IMR-90 (cell line): ENCODE measurements at regions of chr21 and their contacts with region 1.

Region 1: DNA sequence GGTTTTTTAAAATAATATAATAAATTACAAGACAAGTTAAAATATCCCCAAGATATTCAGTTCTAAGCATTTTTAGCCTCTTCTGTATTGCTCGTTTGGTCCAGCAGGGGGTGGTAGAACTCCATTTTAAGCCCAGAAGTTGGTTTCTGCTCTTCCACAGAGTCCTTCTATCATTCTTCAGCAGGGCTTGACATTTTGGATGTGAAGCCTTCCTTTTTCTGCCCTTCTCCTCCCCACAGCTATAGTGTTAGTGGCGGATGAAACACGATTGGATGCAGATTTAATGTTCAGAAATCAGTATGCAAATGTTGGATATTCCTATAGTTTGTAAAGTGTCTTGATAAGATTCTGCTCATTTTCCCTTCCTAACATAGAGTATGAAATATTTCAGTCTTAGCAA is 1.4 kb downstream of the NCAM2 start:
- DNase-seq: peak; percentile 49
- ATAC-seq: peak; percentile 55
- H3K4me3 ChIP-seq: no peak overlapping the region
- H3K27ac ChIP-seq: no peak overlapping the region
- H3K4me1 ChIP-seq: no peaks in the 10 kb centered on the region
- H3K27me3 ChIP-seq: peaks cover 6% of the 10 kb centered on the region; the same call in 1 of the 2 replicates
- CTCF ChIP-seq: peak; percentile 89
- POLR2A ChIP-seq: no peak
- RAD21 ChIP-seq: peak; percentile 89

Region 2: GRCh38 chr21:21101911-21102310 is 102.3 kb after region 1 on chr21:
- CTCF ChIA-PET with region 1: interaction called, 14 read pairs
- POLR2A ChIA-PET with region 1: no interaction called
- dilution Hi-C with region 1: no loop called
- in situ Hi-C with region 1: no loop called
- intact Hi-C with region 1: loop called (anchors 1 kb)
- DNase-seq: peak; percentile 85
- ATAC-seq: peak; percentile 69
- H3K4me3 ChIP-seq: no peak overlapping the region
- H3K27ac ChIP-seq: no peak overlapping the region
- H3K4me1 ChIP-seq: 0 out of 2 replicates have a peak, but pooled peaks cover 1% of the 10 kb centered on the region
- H3K27me3 ChIP-seq: no peaks in the 10 kb centered on the region
- CTCF ChIP-seq: 0 out of 2 replicates have a peak, but pooled peaks have one; percentile 31
- POLR2A ChIP-seq: no peak
- RAD21 ChIP-seq: peak; percentile 30; the same call in 1 of the 2 replicates

Region 3: DNA sequence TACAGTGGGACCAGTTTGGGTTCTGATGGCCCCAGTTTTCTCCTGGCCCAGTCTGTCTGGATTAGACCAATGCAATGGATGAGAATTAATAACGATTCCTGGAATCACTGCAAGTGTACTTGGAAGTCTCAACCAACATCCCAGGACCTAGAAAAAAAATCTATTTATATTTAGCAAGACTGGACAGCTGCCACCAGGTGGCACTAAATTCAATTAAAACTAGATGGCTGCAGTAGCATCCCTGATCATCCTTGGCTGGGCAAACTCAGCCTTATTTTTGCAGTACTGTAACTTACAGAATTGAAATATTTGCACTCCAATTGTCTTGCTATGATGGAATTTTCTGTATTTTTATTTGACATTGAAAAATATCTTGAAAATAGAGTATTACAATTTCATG is 164.2 kb after region 1 on chr21:
- CTCF ChIA-PET with region 1: no interaction called
- POLR2A ChIA-PET with region 1: no interaction called
- dilution Hi-C with region 1: no loop called
- in situ Hi-C with region 1: no loop called
- intact Hi-C with region 1: loop called (anchors 1 kb)
- DNase-seq: peak; percentile 82
- ATAC-seq: peak; percentile 54
- H3K4me3 ChIP-seq: no peak overlapping the region
- H3K27ac ChIP-seq: peak overlapping the region; percentile 40; the same call in 1 of the 2 replicates
- H3K4me1 ChIP-seq: peaks cover 4% of the 10 kb centered on the region
- H3K27me3 ChIP-seq: no peaks in the 10 kb centered on the region
- CTCF ChIP-seq: peak; percentile 69
- POLR2A ChIP-seq: no peak
- RAD21 ChIP-seq: peak; percentile 76

Region 4: GRCh38 chr21:21373969-21374368 is 374.3 kb after region 1 on chr21:
- CTCF ChIA-PET with region 1: no interaction called
- POLR2A ChIA-PET with region 1: no interaction called
- dilution Hi-C with region 1: no loop called
- in situ Hi-C with region 1: loop called (anchors 10 kb)
- intact Hi-C with region 1: loop called (anchors 1 kb)
- DNase-seq: no peak
- ATAC-seq: peak; percentile 42; the same call in 1 of the 2 replicates
- H3K4me3 ChIP-seq: no peak overlapping the region
- H3K27ac ChIP-seq: no peak overlapping the region
- H3K4me1 ChIP-seq: no peaks in the 10 kb centered on the region
- H3K27me3 ChIP-seq: no peaks in the 10 kb centered on the region
- CTCF ChIP-seq: peak; percentile 44
- POLR2A ChIP-seq: no peak
- RAD21 ChIP-seq: peak; percentile 44

Region 5: GRCh38 chr21:21688875-21689274 is 689.2 kb after region 1 on chr21:
- CTCF ChIA-PET with region 1: interaction called, 3 read pairs
- POLR2A ChIA-PET with region 1: no interaction called
- dilution Hi-C with region 1: no loop called
- in situ Hi-C with region 1: loop called (anchors 10 kb)
- intact Hi-C with region 1: loop called (anchors 1 kb)
- DNase-seq: peak; percentile 37
- ATAC-seq: peak; percentile 77
- H3K4me3 ChIP-seq: no peak overlapping the region
- H3K27ac ChIP-seq: no peak overlapping the region
- H3K4me1 ChIP-seq: no peaks in the 10 kb centered on the region
- H3K27me3 ChIP-seq: no peaks in the 10 kb centered on the region
- CTCF ChIP-seq: peak; percentile 61
- POLR2A ChIP-seq: no peak
- RAD21 ChIP-seq: peak; percentile 77

Region 6: DNA sequence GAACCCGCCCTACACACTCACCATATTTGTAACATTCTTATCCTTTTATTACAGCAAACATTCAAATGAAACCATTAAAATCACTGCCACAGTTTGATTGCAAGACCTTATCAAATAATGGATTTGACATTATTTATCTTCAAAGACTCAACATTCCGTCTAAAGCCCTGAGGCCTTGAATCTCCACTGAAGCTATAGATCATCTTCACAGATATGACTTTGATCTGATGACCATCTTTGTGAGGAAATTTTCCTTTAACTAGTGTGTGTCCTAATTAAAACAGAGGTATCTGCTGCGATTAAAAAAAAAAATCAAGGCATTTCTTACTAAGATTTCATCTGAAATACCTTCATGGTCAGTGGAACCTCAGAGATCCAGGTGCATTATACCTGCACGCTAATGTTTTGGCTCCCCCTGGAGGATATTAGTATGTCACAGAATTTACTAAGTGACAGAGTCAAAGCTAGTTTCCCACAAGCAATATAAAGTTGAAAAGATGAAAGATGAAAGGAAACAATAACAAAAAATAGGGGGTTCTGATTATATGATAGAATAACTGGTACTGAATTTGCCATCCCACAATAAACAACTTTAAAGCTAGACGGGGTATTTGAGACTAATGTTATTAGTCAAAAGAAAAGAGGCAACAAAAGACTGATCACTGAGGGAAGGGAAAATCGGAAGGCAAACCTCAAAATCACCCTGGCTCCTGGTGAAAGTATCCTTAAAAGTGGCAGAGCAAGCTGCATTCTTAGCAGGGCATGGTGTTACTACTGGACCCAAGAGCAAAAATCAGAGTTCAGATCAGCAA is 922.0 kb after region 1 on chr21:
- CTCF ChIA-PET with region 1: interaction called, 8 read pairs
- POLR2A ChIA-PET with region 1: no interaction called
- dilution Hi-C with region 1: no loop called
- in situ Hi-C with region 1: loop called (anchors 25 kb)
- intact Hi-C with region 1: loop called (anchors 2 kb)
- DNase-seq: peak; percentile 11
- ATAC-seq: peak; percentile 46; the same call in 1 of the 2 replicates
- H3K4me3 ChIP-seq: no peak overlapping the region
- H3K27ac ChIP-seq: no peak overlapping the region
- H3K4me1 ChIP-seq: no peaks in the 10 kb centered on the region
- H3K27me3 ChIP-seq: no peaks in the 10 kb centered on the region
- CTCF ChIP-seq: peak; percentile 53
- POLR2A ChIP-seq: no peak
- RAD21 ChIP-seq: peak; percentile 72

Region 7: GRCh38 chr21:22791986-22792560 is 1792.4 kb after region 1 on chr21:
- CTCF ChIA-PET with region 1: no interaction called
- POLR2A ChIA-PET with region 1: no interaction called
- dilution Hi-C with region 1: no loop called
- in situ Hi-C with region 1: loop called (anchors 25 kb)
- intact Hi-C with region 1: loop called (anchors 2 kb)
- DNase-seq: peak; percentile 38
- ATAC-seq: no peak; the same call in 1 of the 2 replicates
- H3K4me3 ChIP-seq: no peak overlapping the region
- H3K27ac ChIP-seq: no peak overlapping the region
- H3K4me1 ChIP-seq: no peaks in the 10 kb centered on the region
- H3K27me3 ChIP-seq: no peaks in the 10 kb centered on the region
- CTCF ChIP-seq: peak; percentile 65
- POLR2A ChIP-seq: no peak
- RAD21 ChIP-seq: peak; percentile 55